Psoas muscle (tissue), 8 donors: ENCODE measurements at regions of chr4 and their contacts with region 1.

Region 1: GRCh38 chr4:168923526-168924194 is 86.4 kb downstream of the CBR4 start:
- DNase-seq: no peak
- ATAC-seq: peak; percentile 82 to 88 (median 84)
- H3K4me3 ChIP-seq: no peak overlapping the region
- H3K27ac ChIP-seq: peak overlapping the region; percentile 38
- H3K4me1 ChIP-seq: no peaks in the 10 kb centered on the region
- H3K27me3 ChIP-seq: no peaks in the 10 kb centered on the region
- CTCF ChIP-seq: peak; percentile 74

Region 2: GRCh38 chr4:168183717-168184608 is 739.7 kb before region 1 on chr4:
- intact Hi-C with region 1: loop called (anchors 5 to 10 kb)
- DNase-seq: no peak
- ATAC-seq: peak; percentile 50 to 77 (median 64)
- H3K4me3 ChIP-seq: no peak overlapping the region
- H3K27ac ChIP-seq: no peak overlapping the region
- H3K4me1 ChIP-seq: no peaks in the 10 kb centered on the region
- H3K27me3 ChIP-seq: no peaks in the 10 kb centered on the region
- CTCF ChIP-seq: peak; percentile 74

Region 3: DNA sequence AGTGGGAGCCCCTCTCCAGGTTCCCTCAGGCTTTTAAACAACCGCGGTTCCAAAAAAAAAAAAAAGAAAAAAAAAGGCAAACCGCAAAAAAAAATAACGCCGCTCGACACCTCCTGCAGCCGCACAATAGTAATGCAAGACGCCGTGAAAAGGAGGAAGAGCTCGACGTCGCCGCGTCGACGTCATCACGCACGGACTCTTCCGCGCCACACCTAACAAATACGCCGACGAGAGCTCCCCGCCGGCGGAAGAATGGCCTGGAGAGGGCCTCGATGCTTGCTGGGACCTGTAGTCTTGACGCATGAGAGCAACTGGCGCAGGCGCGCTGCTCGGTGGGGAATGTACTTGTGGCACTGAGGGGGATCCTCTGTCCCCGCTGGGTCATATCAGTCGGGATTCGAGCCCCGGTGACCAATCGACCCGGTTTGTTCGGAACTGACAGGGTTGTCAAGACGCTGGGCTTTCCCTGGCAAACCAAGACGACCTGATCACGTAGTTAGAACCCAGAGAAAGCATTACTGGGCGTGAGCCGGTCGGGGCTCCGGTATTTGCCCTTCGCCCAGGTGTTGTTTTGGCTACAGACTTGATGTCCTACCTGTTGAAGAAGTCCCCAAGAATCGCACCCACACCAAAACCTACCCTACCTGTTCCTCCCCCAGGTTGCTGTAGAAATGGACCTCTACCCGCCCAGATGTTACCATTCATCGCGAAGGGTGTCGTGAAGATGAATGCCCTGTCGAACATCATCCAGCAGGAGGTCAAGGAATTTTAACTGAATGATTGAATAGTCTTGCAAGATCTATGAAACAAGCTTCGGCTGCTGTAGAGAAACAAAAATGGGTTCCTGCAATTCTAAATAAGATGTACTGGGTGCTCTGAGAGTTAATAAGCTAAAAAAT is 86.7 kb after region 1 on chr4 and contains the start of gene CBR4:
- intact Hi-C with region 1: loop called (anchors 5 kb)
- DNase-seq: peak; percentile 98 to 99
- ATAC-seq: peak; percentile 98 to 99 (median 98)
- H3K4me3 ChIP-seq: peak within 1 kb of the TSS; percentile 90
- H3K27ac ChIP-seq: peak within 1 kb of the TSS; percentile 98
- H3K4me1 ChIP-seq: peaks cover 24% of the 10 kb centered on the region
- H3K27me3 ChIP-seq: no peaks in the 10 kb centered on the region
- CTCF ChIP-seq: peak; percentile 41
- total RNA-seq, gene CBR4: 10.4 to 18.5 (median 14.9) TPM

Region 4: GRCh38 chr4:169492438-169493163 is 568.9 kb after region 1 on chr4:
- intact Hi-C with region 1: loop called (anchors 2 to 5 kb)
- DNase-seq: peak in 1 of 2 donors; percentile 35
- ATAC-seq: peak in 3 of 4 donors; percentile 53 to 60 (median 55)
- H3K4me3 ChIP-seq: no peak overlapping the region
- H3K27ac ChIP-seq: no peak overlapping the region
- H3K4me1 ChIP-seq: no peaks in the 10 kb centered on the region
- H3K27me3 ChIP-seq: no peaks in the 10 kb centered on the region
- CTCF ChIP-seq: peak; percentile 49

Region 5: GRCh38 chr4:169566021-169566818 is 642.6 kb after region 1 on chr4:
- intact Hi-C with region 1: loop called in 1 of 2 experiments (anchors 10 kb)
- DNase-seq: no peak
- ATAC-seq: peak in 2 of 4 donors; percentile 53 to 77
- H3K4me3 ChIP-seq: no peak overlapping the region
- H3K27ac ChIP-seq: no peak overlapping the region
- H3K4me1 ChIP-seq: no peaks in the 10 kb centered on the region
- H3K27me3 ChIP-seq: no peaks in the 10 kb centered on the region
- CTCF ChIP-seq: peak; percentile 60